Caco-2 (cell line): ENCODE measurements at regions of chr9 and their contacts with region 1.

Region 1: GRCh38 chr9:78369639-78370219 is 72.8 kb downstream of the PSAT1 start:
- DNase-seq: peak; percentile 32 to 44
- H3K4me3 ChIP-seq: no peak overlapping the region
- H3K4me3 Mint-ChIP-seq: no peak overlapping the region
- H3K27ac Mint-ChIP-seq: no peak overlapping the region
- H3K4me1 ChIP-seq: no peaks in the 10 kb centered on the region
- H3K4me1 Mint-ChIP-seq: no peaks in the 10 kb centered on the region
- H3K27me3 ChIP-seq: no peaks in the 10 kb centered on the region
- H3K27me3 Mint-ChIP-seq: no peaks in the 10 kb centered on the region
- CTCF ChIP-seq: peak in 1 of 2 experiments; percentile 52

Region 2: GRCh38 chr9:78261403-78262001 is 108.2 kb before region 1 on chr9:
- CTCF ChIA-PET with region 1: no interaction called
- POLR2A ChIA-PET with region 1: no interaction called
- intact Hi-C with region 1: loop called (anchors 1 kb)
- DNase-seq: no peak
- H3K4me3 ChIP-seq: no peak overlapping the region
- H3K4me3 Mint-ChIP-seq: no peak overlapping the region
- H3K27ac Mint-ChIP-seq: no peak overlapping the region
- H3K4me1 ChIP-seq: no peaks in the 10 kb centered on the region
- H3K4me1 Mint-ChIP-seq: no peaks in the 10 kb centered on the region
- H3K27me3 ChIP-seq: no peaks in the 10 kb centered on the region
- H3K27me3 Mint-ChIP-seq: no peaks in the 10 kb centered on the region
- CTCF ChIP-seq: no peak

Region 3: GRCh38 chr9:78422309-78422708 is 52.6 kb after region 1 on chr9:
- CTCF ChIA-PET with region 1: no interaction called
- POLR2A ChIA-PET with region 1: no interaction called
- intact Hi-C with region 1: no loop called
- DNase-seq: no peak
- H3K4me3 ChIP-seq: no peak overlapping the region
- H3K4me3 Mint-ChIP-seq: no peak overlapping the region
- H3K27ac Mint-ChIP-seq: no peak overlapping the region
- H3K4me1 ChIP-seq: no peaks in the 10 kb centered on the region
- H3K4me1 Mint-ChIP-seq: no peaks in the 10 kb centered on the region
- H3K27me3 ChIP-seq: no peaks in the 10 kb centered on the region
- H3K27me3 Mint-ChIP-seq: no peaks in the 10 kb centered on the region
- CTCF ChIP-seq: no peak